B cell (primary cell): ENCODE measurements at regions of chr1 and their contacts with region 1.

Region 1: DNA sequence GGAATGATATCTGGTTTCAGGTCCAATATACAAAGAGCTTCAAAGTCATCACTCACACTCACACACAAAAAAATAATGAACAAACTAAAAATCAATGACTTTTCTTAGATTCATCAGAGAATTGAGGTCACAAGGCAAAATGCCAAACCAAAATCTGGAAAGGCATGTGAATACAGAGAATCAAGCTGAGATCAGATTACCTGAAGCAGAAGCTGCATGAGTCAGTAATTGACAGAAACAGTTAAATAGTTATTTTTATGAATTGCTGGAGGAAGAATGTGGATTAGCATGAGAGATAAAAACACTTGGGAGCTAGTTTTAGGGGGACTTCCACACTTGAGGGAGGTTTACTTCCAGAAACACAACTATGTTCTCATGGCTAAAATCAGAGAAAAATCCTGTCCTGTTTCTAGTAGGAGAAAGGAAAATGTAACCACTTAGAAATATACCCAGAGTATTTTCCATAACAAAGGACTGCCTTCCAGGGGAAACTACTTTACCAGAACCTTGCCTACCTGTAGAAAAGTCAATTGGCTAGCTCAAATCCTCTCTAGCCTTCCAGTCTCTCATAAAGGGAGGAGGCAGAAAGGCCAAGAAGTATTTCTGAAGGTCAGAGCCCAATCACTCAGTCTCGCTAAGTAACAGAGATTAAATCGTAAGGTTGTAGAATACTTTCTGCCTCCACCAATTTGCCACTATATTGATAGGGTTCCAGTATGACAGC is 536.5 kb upstream of the NR5A2 start:
- DNase-seq: no peak
- ATAC-seq: no peak
- H3K4me3 ChIP-seq: no peak overlapping the region
- H3K4me3 Mint-ChIP-seq: no peak overlapping the region
- H3K27ac ChIP-seq: no peak overlapping the region
- H3K27ac Mint-ChIP-seq: peak overlapping the region; percentile 41
- H3K4me1 ChIP-seq: peaks cover 10 to 17% of the 10 kb centered on the region in 2 donors
- H3K4me1 Mint-ChIP-seq: peaks cover 34% of the 10 kb centered on the region
- H3K27me3 ChIP-seq: no peaks in the 10 kb centered on the region
- H3K27me3 Mint-ChIP-seq: no peaks in the 10 kb centered on the region
- CTCF ChIP-seq: no peak

Region 2: DNA sequence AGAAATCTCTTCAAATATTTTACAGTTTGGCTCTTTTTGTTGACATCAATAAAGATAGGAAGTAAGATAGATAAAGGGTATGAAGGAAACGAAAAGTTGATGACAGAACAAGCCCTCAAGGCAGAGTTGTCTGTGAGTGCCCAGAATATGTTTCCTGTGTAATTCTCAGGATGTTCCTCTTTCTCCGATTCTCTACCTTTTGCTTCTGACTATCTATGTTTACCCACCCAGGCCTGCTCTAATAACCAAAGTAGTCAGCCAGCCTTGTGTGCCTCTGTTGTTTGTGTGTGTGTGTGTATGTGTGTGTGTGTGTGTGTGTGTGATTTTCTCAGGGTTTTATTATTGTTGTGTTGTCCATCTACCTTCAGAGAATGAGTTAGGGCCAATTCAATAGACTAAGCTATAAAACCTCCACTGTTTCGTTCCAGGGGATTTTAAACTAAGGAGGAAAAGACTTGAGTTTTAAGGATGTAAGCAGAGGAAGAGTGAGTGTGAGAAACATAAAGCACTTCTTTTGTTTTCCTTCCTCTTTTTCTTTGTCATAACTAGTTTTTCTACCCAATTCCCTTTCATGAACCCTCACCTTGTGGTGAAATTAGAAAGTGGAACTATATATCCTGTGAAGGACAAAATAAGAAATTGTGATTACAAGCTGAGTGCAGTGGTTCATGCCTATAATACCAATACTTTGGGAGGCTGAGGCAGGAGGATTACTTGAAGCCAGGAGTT is 90.8 kb before region 1 on chr1:
- CTCF ChIA-PET with region 1: no interaction called
- POLR2A ChIA-PET with region 1: no interaction called
- intact Hi-C with region 1: loop called (anchors 5 kb)
- DNase-seq: peak; percentile 74
- ATAC-seq: peak; percentile 66
- H3K4me3 ChIP-seq: peak overlapping the region in 3 of 5 experiments; percentile 3 to 50 (median 17)
- H3K4me3 Mint-ChIP-seq: peak overlapping the region; percentile 73
- H3K27ac ChIP-seq: peak overlapping the region; percentile 83 to 91
- H3K27ac Mint-ChIP-seq: peak overlapping the region; percentile 88
- H3K4me1 ChIP-seq: peaks cover 42 to 55% of the 10 kb centered on the region in 2 donors
- H3K4me1 Mint-ChIP-seq: peaks cover 62% of the 10 kb centered on the region
- H3K27me3 ChIP-seq: no peaks in the 10 kb centered on the region
- H3K27me3 Mint-ChIP-seq: no peaks in the 10 kb centered on the region
- CTCF ChIP-seq: peak; percentile 11